K562 (cell line): ENCODE measurements at regions of chr20 and their contacts with region 1.

Region 1: GRCh38 chr20:63216041-63216848 is at the start of gene YTHDF1:
- DNase-seq: peak; percentile 96 to 98 (median 97)
- ATAC-seq: peak; percentile 97
- H3K4me3 ChIP-seq: peak within 1 kb of the TSS; percentile 90
- H3K27ac ChIP-seq: peak within 1 kb of the TSS; percentile 82
- H3K4me1 ChIP-seq: peaks cover 17 to 41% of the 10 kb centered on the region in 2 experiments; a peak in 4 of 5 replicates
- H3K27me3 ChIP-seq: peaks cover 0 to 20% of the 10 kb centered on the region in 2 experiments; a peak in 3 of 5 replicates
- CTCF ChIP-seq: no peak
- EP300 ChIP-seq: no peak
- POLR2A ChIP-seq: peak; percentile 77
- RAD21 ChIP-seq: no peak
- polyA plus RNA-seq, gene YTHDF1: 10.1 to 11.1 TPM

Region 2: GRCh38 chr20:63196768-63197470 is 19.3 kb before region 1 on chr20:
- CTCF ChIA-PET with region 1: no interaction called
- POLR2A ChIA-PET with region 1: interaction called, 11 read pairs
- in situ Hi-C with region 1: no loop called
- intact Hi-C with region 1: no loop called
- DNase-seq: peak; percentile 42 to 61 (median 50)
- ATAC-seq: peak; percentile 88
- H3K4me3 ChIP-seq: no peak overlapping the region
- H3K27ac ChIP-seq: peak overlapping the region; percentile 32; the same call in 1 of the 3 replicates
- H3K4me1 ChIP-seq: peaks cover 8 to 10% of the 10 kb centered on the region in 2 experiments; a peak in 4 of 5 replicates
- H3K27me3 ChIP-seq: no peaks in the 10 kb centered on the region
- CTCF ChIP-seq: no peak
- EP300 ChIP-seq: no peak
- POLR2A ChIP-seq: no peak
- RAD21 ChIP-seq: no peak